OCI-LY7 (cell line): ENCODE measurements at regions of chr3 and their contacts with region 1.

Region 1: GRCh38 chr3:186930641-186931531 is 560 bp downstream of the ST6GAL1 start:
- DNase-seq: peak; percentile 88
- H3K4me3 ChIP-seq: peak overlapping the region; percentile 88
- H3K27ac ChIP-seq: peak overlapping the region; percentile 50
- H3K4me1 ChIP-seq: peaks cover 37% of the 10 kb centered on the region
- CTCF ChIP-seq: peak; percentile 67

Region 2: GRCh38 chr3:186789554-186790260 is 141.2 kb before region 1 on chr3:
- CTCF ChIA-PET with region 1: no interaction called
- POLR2A ChIA-PET with region 1: no interaction called
- intact Hi-C with region 1: loop called (anchors 5 kb)
- DNase-seq: peak; percentile 36
- H3K4me3 ChIP-seq: no peak overlapping the region
- H3K27ac ChIP-seq: peak overlapping the region; percentile 34
- H3K4me1 ChIP-seq: peaks cover 42% of the 10 kb centered on the region
- CTCF ChIP-seq: no peak

Region 3: DNA sequence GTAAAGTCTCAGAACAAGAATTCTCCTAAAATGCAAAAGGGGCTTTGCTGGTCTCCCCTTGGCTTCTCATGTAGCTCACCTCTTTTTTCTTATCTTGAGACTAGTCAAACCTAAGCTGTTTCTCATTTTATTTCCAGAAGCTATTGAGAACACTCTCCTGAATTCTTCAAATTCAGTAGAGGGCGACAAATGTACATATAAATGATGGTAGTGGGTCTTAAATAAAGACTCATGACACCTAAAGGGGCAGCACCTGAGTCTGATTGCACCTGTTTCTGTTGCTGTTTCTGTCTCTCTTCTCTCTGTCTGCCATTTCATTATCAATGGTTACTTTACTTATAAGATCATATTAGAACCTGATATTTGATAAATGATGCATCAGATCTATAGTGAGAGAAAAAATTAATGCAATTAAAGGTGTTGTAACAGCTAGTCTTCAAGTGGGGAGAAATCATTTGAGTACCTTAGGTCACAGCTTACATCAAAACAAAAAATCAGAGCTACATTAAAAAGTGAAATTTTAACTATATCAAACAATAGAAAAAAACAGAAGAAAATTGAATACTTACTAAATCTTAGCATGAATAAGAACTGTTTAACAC is 81.4 kb before region 1 on chr3:
- CTCF ChIA-PET with region 1: no interaction called
- POLR2A ChIA-PET with region 1: no interaction called
- intact Hi-C with region 1: loop called (anchors 1 kb)
- DNase-seq: peak; percentile 85
- H3K4me3 ChIP-seq: no peak overlapping the region
- H3K27ac ChIP-seq: no peak overlapping the region
- H3K4me1 ChIP-seq: peaks cover 16% of the 10 kb centered on the region
- CTCF ChIP-seq: peak; percentile 91

Region 4: GRCh38 chr3:186946756-186947375 is 16.0 kb after region 1 on chr3:
- CTCF ChIA-PET with region 1: interaction called, 4 read pairs
- POLR2A ChIA-PET with region 1: interaction called, 15 read pairs
- intact Hi-C with region 1: no loop called
- DNase-seq: peak; percentile 84
- H3K4me3 ChIP-seq: peak overlapping the region; percentile 44
- H3K27ac ChIP-seq: peak overlapping the region; percentile 82
- H3K4me1 ChIP-seq: peaks cover 60% of the 10 kb centered on the region
- CTCF ChIP-seq: no peak

Region 5: DNA sequence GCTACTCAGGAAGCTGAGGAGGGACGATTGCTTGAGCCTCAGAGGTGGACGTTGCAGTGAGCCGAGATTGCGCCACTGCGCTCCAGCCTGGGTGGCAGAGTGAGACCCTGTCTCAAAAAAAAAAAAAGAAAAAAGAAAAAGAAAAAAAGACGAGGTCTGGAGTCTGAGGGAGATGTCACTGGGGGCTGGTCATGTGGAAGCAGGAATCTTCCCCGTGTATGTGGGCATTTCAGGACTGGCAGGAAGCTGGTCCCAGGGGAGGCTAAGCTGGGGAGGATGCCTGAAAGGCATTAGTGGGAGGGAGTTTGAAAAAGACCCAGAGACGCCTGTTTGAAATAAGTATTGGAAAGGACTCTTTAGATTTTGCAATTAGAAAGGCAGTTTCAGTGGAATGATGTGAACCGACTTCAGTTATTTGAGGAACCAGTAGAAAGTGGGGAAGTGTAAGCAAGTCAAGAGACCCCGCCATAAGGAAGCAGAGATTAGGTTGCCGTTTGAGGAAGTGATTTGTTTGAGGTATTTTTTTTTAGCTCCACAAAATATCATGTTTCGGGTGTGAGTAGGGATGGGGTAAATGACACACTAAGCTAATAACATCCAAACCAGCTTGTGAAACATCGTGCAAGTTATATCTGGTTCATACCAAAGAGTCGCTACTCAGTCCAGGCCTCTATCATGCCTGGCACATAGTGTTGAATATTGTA is 54.9 kb after region 1 on chr3:
- CTCF ChIA-PET with region 1: no interaction called
- POLR2A ChIA-PET with region 1: interaction called, 11 read pairs
- intact Hi-C with region 1: no loop called
- DNase-seq: peak; percentile 75
- H3K4me3 ChIP-seq: peak overlapping the region; percentile 54
- H3K27ac ChIP-seq: peak overlapping the region; percentile 98
- H3K4me1 ChIP-seq: peaks cover 75% of the 10 kb centered on the region
- CTCF ChIP-seq: no peak

Region 6: GRCh38 chr3:187000711-187001151 is 69.8 kb after region 1 on chr3:
- CTCF ChIA-PET with region 1: interaction called, 4 read pairs
- POLR2A ChIA-PET with region 1: interaction called, 15 read pairs
- intact Hi-C with region 1: loop called (anchors 2 kb)
- DNase-seq: peak; percentile 92
- H3K4me3 ChIP-seq: peak overlapping the region; percentile 77
- H3K27ac ChIP-seq: peak overlapping the region; percentile 98
- H3K4me1 ChIP-seq: peaks cover 72% of the 10 kb centered on the region
- CTCF ChIP-seq: no peak

Region 7: GRCh38 chr3:187490366-187490765 is 559.5 kb after region 1 on chr3:
- CTCF ChIA-PET with region 1: no interaction called
- POLR2A ChIA-PET with region 1: no interaction called
- intact Hi-C with region 1: no loop called
- DNase-seq: no peak
- H3K4me3 ChIP-seq: no peak overlapping the region
- H3K27ac ChIP-seq: no peak overlapping the region
- H3K4me1 ChIP-seq: no peaks in the 10 kb centered on the region
- CTCF ChIP-seq: no peak

Region 8: DNA sequence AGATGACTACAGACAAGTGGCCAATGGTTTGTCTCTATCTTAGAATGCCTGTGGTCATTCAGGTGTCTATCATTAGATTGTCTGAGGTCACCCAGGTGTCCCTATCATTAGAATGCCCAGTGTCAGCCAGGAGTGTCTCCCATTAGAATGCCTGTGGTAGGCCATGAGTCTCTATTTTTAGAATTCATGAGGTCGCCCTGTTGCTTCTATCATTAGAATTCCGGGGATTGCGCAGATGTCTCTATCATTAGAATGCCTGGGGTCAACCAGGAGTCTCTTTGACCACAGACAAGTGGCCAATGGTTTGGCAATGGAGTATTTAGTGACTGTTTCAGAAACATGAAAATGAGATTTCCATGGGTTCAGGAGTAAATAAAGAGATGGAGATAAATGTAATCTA is 763.9 kb after region 1 on chr3:
- CTCF ChIA-PET with region 1: no interaction called
- POLR2A ChIA-PET with region 1: no interaction called
- intact Hi-C with region 1: no loop called
- DNase-seq: no peak
- H3K4me3 ChIP-seq: no peak overlapping the region
- H3K27ac ChIP-seq: no peak overlapping the region
- H3K4me1 ChIP-seq: no peaks in the 10 kb centered on the region
- CTCF ChIP-seq: no peak